AG04450 (cell line): ENCODE measurements at regions of chr4 and their contacts with region 1.

Region 1: DNA sequence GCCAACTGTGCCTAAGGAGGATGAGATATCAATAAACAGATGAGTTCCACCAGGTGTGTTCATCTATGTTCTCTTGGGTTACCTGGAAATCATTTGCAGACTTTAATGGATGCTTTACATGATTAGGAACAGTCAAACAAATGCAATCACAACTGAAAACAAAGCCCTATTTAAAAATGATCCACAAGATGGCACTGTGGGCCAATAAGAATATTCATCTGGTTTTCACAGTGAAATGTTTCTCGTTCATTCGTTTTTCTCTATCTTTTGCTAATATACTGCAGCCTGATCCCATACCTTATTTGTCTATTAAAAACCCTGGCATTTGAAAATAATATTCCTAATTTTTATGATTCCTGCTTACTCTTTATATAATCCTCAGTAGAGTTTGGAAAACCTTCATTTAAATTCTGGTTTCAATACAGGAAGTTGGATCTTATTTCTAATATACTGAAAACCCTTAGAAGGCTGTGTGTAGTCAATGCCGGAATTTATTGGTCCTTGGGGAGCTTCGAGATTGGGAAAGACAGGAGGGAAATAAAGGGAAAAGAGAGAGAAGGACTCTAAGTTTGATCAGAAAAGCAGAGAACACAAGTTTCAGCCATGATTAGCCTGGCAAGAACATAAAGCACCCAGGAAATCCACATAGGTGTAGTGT is 63.8 kb upstream of the TAPT1 start:
- DNase-seq: no peak
- H3K4me3 ChIP-seq: no peak overlapping the region; the same call in 1 of the 2 replicates
- H3K27ac ChIP-seq: no peak overlapping the region
- H3K27me3 ChIP-seq: peaks cover 9% of the 10 kb centered on the region
- CTCF ChIP-seq: peak; percentile 65

Region 2: DNA sequence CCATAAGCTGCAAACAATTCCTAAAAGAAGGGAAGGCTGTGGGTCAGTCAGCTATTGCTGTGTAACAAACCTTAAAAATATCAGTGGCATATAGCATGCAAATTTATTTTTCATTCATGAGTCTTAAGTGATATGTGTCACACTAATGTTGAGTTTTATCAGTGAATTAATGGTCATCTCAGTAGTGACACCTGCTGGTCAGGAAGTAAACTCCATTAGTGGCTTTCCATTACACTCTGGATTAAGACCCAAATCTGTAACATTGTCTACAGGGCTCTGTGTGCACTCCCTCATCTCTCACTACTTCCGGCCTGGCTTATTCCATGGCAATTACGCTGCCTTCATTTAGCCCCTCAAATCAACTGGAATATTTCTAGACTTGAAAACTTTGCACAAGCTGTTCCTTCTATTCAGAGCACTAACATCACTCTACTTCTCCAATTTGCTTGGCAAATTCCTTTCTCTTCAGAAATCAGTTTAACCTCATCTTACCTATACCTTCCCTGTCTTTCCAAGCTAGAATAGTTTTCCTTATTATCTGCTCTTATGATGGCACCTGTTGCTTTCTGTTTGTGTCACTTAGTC is 153.6 kb after region 1 on chr4:
- CTCF ChIA-PET with region 1: interaction called, 37 read pairs
- POLR2A ChIA-PET with region 1: no interaction called
- DNase-seq: peak; percentile 8
- H3K4me3 ChIP-seq: no peak overlapping the region
- H3K27ac ChIP-seq: no peak overlapping the region
- H3K27me3 ChIP-seq: peaks cover 7% of the 10 kb centered on the region
- CTCF ChIP-seq: peak; percentile 75